ENCODE measurements at regions of chr3 and their contacts with region 1.

Region 1: GRCh38 chr3:194344012-194344411 is 7.1 kb downstream of the CPN2 start:
- DNase-seq: no peak
- H3K4me3 ChIP-seq: no peak overlapping the region
- H3K27me3 ChIP-seq: peaks cover 5% of the 10 kb centered on the region; the same call in 1 of the 2 replicates
- CTCF ChIP-seq: peak; percentile 97

Region 2: DNA sequence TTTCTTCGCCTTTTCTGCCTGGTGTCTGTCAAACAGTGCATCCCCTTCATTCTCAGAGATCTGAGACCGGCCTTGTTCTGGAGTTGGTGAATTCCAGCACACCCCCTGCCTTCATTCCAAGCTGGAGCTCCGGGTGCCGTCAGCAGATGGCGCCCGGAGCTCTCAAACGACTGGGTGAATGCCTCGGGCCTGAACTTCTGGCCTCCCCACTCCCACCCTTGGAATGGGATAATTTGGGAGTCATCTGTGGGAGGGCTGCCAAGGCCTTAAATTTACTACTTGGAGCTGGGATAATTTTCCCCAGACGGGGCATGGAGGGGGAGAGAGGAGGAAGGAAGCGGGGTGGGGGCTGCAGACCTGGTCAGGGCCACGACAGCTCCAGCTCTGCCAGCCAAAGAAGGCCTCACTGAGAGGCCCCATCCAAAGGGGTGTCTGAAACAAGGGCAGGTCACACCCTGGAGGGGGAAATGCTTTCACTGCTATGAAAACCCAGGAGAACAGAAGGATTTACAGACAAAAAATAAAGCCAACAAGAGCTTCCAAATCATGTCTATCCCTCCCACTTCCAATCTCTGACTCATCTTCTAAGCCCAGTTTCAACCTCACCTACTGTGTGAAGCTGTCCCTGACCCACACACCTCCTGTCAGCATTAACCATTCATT is 563.1 kb before region 1 on chr3:
- CTCF ChIA-PET with region 1: interaction called, 18 read pairs
- POLR2A ChIA-PET with region 1: no interaction called
- DNase-seq: no peak
- H3K4me3 ChIP-seq: no peak overlapping the region
- H3K27me3 ChIP-seq: peaks cover 22% of the 10 kb centered on the region
- CTCF ChIP-seq: peak; percentile 92

Region 3: GRCh38 chr3:194333212-194333980 is 10.6 kb before region 1 on chr3:
- CTCF ChIA-PET with region 1: interaction called, 77 read pairs
- POLR2A ChIA-PET with region 1: no interaction called
- DNase-seq: no peak
- H3K4me3 ChIP-seq: peak overlapping the region; percentile 63
- H3K27me3 ChIP-seq: no peaks in the 10 kb centered on the region
- CTCF ChIP-seq: peak; percentile 98

Region 4: DNA sequence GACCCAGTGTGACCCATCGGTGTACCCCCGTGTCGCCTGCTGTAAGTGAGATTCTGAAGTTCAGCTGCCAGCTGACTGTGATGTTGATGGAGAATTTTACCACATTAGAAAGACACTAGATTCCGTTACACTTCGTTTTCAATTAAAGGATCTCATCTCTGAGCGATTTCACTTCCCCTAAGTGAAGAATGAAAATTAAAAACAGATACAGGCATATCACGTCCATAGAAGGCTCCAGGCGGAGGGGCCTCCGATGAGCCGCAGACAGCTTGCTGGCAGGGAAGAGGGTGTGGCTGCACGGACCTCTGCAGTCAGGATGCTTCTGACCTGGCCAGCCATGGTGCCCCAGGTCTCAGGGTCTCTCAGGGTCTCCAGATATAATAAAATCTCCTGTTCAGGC is 13.7 kb after region 1 on chr3:
- CTCF ChIA-PET with region 1: interaction called, 37 read pairs
- POLR2A ChIA-PET with region 1: no interaction called
- DNase-seq: no peak
- H3K4me3 ChIP-seq: no peak overlapping the region
- H3K27me3 ChIP-seq: peaks cover 6% of the 10 kb centered on the region
- CTCF ChIP-seq: no peak

Region 5: DNA sequence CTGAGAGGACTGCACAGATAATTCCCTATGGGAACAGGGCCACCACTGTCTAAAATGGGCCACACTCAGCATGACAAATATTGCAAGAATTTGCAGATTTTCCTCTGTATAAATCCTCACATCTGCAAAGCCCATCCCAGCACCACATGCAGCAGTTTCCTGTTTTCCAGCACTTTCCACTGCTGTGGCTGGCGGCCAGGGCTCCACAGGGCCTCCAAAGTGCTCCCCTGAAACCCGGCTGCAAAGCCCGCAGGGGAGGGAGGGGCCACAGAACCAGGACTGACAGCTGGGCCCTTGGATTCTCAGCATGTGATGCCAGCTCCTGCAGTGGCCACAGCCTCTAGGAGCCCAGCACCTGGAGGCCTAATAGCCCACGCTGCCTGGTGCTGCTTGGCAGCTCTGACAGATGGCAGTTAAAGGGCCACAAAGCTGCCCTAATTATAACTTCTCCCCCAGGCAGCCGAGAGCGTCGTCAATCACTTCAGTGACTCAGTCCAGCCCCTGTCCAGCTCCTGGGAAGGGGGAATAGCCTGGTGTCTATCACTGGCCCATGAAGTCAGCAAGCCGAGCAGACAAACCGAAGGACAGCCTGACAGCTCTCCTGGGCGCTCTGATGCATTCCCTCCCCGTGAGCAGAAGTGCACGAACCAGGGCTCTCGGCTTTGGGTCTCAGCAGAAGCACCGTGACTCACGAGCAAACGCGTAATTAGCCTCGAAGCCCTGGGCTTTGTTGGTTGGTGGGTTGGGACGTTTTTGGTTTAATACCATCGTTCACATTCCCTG is 20.8 kb after region 1 on chr3:
- CTCF ChIA-PET with region 1: interaction called, 37 read pairs
- POLR2A ChIA-PET with region 1: interaction called, 4 read pairs
- DNase-seq: peak; percentile 68
- H3K4me3 ChIP-seq: no peak overlapping the region
- H3K27me3 ChIP-seq: peaks cover 2% of the 10 kb centered on the region
- CTCF ChIP-seq: no peak

Region 6: DNA sequence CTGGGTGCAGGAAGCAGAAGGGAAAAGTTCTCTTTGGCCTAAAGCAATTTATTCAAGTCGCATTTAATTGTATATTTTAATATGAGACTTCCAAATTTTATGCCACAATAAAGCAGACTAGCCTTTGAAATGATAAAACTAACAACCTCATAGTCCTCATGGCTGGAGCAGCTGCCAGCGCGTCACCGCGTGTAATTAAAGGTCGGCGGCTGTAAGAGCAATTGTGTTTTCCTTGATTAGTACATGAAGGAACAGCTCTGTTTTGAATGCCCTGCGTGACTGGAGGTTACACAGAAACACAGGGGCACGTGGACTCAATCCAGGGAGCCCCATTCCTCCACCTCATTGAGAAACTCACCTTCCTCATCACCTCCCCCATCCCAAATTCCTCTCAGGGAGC is 35.6 kb after region 1 on chr3:
- CTCF ChIA-PET with region 1: interaction called, 13 read pairs
- POLR2A ChIA-PET with region 1: no interaction called
- DNase-seq: no peak
- H3K4me3 ChIP-seq: no peak overlapping the region
- H3K27me3 ChIP-seq: peaks cover 7% of the 10 kb centered on the region
- CTCF ChIP-seq: no peak

Region 7: GRCh38 chr3:194386642-194387041 is 42.6 kb after region 1 on chr3:
- CTCF ChIA-PET with region 1: interaction called, 11 read pairs
- POLR2A ChIA-PET with region 1: no interaction called
- DNase-seq: no peak
- H3K4me3 ChIP-seq: no peak overlapping the region
- H3K27me3 ChIP-seq: peaks cover 5% of the 10 kb centered on the region; the same call in 1 of the 2 replicates
- CTCF ChIP-seq: no peak

Region 8: GRCh38 chr3:194497821-194498598 is 154.0 kb after region 1 on chr3:
- CTCF ChIA-PET with region 1: no interaction called
- POLR2A ChIA-PET with region 1: no interaction called
- DNase-seq: no peak
- H3K4me3 ChIP-seq: no peak overlapping the region
- H3K27me3 ChIP-seq: no peaks in the 10 kb centered on the region
- CTCF ChIP-seq: no peak